ENCODE measurements at regions of chr5 and their contacts with region 1.

Region 1: GRCh38 chr5:141691867-141692532 is 10.0 kb upstream of the ARAP3 start:
- DNase-seq: peak; percentile 78 to 92
- H3K4me3 ChIP-seq: peak overlapping the region; percentile 28
- H3K4me1 ChIP-seq: peaks cover 3% of the 10 kb centered on the region; the same call in 1 of the 2 replicates
- H3K27me3 ChIP-seq: peaks cover 9% of the 10 kb centered on the region

Region 2: GRCh38 chr5:141412854-141413539 is 279.0 kb before region 1 on chr5 and contains the start of gene PCDHGA10:
- in situ Hi-C with region 1: no loop called
- DNase-seq: peak; percentile 66 to 85
- H3K4me3 ChIP-seq: peak within 1 kb of the TSS; percentile 57
- H3K4me1 ChIP-seq: no peaks in the 10 kb centered on the region; the same call in 1 of the 2 replicates
- H3K27me3 ChIP-seq: no peaks in the 10 kb centered on the region

Region 3: DNA sequence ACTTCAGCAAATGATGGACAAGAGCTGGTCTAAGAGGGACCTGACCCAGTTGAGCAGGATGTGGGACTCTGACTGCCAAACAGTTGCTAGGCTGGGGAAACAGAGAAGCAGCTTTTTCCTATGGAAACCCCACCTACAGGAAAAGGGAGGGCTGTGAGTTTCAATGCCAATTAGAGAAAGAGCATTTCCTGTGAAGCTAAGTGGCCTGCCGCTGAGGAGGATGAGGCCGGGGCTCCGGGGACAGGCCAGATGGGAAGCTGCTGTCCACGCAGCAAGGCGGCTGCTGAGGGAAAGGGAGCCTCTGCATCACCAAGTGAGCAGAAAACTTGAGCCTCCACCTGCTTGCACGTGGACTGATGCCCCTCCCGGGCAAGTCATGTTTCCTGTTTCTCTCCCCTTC is 266.1 kb after region 1 on chr5 and contains the start of gene PCDH12:
- in situ Hi-C with region 1: loop called (anchors 5 kb)
- DNase-seq: no peak
- H3K4me3 ChIP-seq: no peak within 1 kb of the TSS
- H3K4me1 ChIP-seq: no peaks in the 10 kb centered on the region; the same call in 1 of the 2 replicates
- H3K27me3 ChIP-seq: no peaks in the 10 kb centered on the region

Region 4: GRCh38 chr5:142939884-142940283 is 1247.9 kb after region 1 on chr5:
- in situ Hi-C with region 1: no loop called
- DNase-seq: no peak
- H3K4me3 ChIP-seq: no peak overlapping the region
- H3K4me1 ChIP-seq: no peaks in the 10 kb centered on the region
- H3K27me3 ChIP-seq: no peaks in the 10 kb centered on the region

Region 5: DNA sequence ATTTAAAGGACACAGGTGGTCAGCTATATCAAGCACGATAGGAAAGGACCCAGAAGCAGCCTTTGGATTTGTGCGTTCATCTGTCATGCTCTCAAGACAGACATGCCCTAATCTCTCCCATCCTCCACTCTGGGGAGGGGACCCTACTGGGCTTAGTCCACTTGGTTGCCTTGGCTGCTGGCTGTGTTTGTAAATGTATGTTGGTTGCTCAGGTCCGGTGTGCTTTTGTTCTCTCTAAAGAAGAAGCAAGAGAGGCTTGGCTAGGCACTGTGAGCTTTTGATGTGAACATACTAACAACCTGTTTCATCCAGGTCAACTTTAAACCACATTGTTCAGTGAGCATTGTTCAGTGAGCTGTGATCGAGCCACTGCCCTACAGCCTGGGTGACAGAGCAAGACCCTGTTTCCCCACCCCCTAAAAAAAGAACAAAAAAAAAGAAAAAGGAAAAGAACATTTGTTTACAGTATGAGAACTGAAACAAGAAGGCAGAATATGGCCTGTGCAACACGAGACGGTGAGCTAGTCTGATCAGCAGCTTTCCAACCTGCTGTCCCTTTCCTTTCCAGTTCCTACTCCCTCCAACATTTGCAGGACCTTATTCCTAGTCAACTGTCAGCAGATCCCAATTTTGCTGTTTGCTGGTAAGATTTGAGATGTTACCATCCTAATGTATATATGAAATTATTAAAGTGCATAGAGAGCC is 1306.5 kb after region 1 on chr5:
- in situ Hi-C with region 1: no loop called
- DNase-seq: no peak
- H3K4me3 ChIP-seq: no peak overlapping the region
- H3K4me1 ChIP-seq: no peaks in the 10 kb centered on the region
- H3K27me3 ChIP-seq: no peaks in the 10 kb centered on the region

Measured in HAP-1 (cell line).